ENCODE measurements at regions of chr7 and their contacts with region 1.

Region 1: GRCh38 chr7:65216459-65216858 is 157.2 kb upstream of the ZNF92 start:
- ATAC-seq: peak in 5 of 8 experiments; percentile 43 to 80 (median 50)
- H3K4me3 ChIP-seq: no peak overlapping the region
- H3K27ac ChIP-seq: no peak overlapping the region
- H3K4me1 ChIP-seq: no peaks in the 10 kb centered on the region

Region 2: DNA sequence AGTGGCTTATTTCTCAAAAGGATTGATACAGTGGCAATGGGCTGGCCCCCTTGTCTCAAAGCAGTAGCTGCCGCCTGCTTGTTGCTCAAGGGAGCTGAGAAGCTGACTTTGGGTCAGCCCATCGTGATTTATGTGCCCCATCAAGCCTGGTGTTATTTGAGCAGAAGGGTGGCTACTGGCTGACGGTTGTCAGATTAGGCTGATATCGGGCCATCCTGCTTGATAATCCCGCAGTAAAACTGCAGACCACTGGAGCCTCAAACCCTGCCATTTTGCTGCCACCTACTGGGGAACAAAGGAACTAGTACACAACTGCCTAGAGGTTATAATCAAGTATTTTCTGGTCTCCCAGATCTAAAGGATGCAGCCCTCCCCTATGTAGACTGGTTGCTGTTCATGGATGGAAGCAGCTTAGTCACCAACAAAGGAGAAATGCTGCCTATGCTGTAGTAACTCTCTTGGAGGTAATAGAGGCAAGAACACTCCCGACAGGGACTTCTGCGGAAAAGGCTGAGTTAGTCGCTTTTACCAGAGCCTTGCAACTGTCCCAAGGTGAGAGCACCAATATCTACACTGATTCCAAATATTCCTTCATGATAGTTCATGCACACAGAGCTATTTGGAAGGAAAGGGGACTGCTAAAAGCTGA is 91.3 kb after region 1 on chr7:
- in situ Hi-C with region 1: loop called in 1 of 9 experiments (anchors 25 kb)
- ATAC-seq: peak; percentile 79 to 99 (median 98)
- H3K4me3 ChIP-seq: no peak overlapping the region
- H3K27ac ChIP-seq: no peak overlapping the region
- H3K4me1 ChIP-seq: no peaks in the 10 kb centered on the region

Region 3: DNA sequence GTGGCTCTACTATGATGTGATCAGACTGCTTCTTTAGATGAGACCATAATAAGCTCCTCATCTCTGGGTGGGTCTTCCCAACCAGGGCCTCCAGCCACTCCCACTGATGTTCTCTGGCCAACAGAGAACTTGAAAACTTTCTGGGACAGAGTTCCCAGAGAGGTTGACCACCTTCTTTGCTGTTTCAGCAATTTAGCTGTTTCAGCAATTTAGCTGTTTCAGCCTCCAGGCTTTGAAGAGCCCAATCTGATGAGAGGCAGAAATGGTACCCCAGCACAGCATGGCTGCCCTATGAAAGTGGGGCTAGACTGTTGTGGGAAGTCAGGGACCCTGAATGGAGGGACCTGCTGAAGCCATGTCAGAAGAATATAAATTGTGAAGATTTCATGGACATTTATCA is 206.2 kb after region 1 on chr7:
- in situ Hi-C with region 1: no loop called
- ATAC-seq: no peak
- H3K4me3 ChIP-seq: no peak overlapping the region
- H3K27ac ChIP-seq: no peak overlapping the region
- H3K4me1 ChIP-seq: no peaks in the 10 kb centered on the region

Region 4: DNA sequence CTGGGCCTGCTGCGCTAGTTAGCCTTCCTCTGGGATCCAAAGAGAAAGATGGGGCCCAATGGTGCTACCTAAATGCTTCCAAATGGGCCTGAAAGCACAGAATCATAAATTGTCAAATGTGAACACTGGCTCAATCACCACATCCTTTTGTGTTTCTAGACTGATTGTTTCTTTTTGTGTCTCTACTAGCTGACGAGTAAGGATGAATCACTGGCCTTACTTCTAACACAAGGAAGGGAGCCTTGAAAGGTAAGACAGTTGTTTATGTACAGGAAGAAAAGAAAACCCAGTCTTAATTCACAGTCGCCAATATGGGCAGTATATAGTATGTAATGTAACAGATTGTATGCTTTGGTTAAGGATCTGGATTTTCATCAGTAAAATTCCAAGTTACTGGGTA is 246.7 kb after region 1 on chr7:
- in situ Hi-C with region 1: loop called in 1 of 9 experiments (anchors 25 kb)
- ATAC-seq: no peak
- H3K4me3 ChIP-seq: no peak overlapping the region
- H3K27ac ChIP-seq: no peak overlapping the region
- H3K4me1 ChIP-seq: no peaks in the 10 kb centered on the region